HEK293T (cell line): ENCODE measurements at regions of chr4 and their contacts with region 1.

Region 1: DNA sequence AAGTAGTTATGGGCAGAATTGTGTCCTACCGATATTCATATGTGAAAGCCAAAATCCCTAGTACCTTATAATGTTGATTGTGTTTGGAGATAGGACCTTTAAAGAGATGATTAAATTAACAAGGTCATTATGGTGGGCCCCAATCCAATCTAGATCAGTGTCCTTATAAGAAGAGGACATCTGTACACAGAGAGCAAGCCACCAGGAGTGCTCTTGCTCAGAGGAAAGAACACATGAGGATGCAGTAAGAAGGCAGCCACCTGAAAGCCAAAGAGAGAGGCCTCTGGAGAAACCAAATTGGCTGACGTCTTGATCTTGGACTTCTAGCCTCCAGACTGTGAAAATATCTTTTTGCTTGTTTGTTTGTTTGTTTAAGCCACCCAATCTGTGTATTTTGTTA is 1290.8 kb upstream of the PABPC4L start:
- DNase-seq: no peak

Region 2: GRCh38 chr4:135508005-135508714 is 15.7 kb after region 1 on chr4:
- CTCF ChIA-PET with region 1: no interaction called
- POLR2A ChIA-PET with region 1: no interaction called
- DNase-seq: no peak

Region 3: DNA sequence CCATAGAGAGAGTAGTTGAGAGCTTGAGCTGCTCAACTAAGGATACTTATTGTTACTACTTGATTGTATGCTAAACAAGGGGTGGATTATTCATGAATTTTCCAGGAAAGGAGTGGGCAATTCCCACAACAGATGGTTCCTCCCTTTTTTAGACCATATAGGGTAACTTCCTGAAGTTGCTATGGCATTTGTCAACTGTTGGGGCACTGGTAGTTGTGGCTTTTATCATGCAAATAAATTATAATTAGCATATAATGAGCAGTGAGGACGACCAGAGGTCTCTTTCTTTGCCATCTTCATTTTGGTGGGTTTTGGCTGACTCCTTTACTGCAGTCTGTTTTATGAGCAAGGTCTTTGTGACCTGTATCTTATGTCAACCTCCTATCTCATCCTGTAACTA is 112.6 kb after region 1 on chr4:
- CTCF ChIA-PET with region 1: interaction called, 10 read pairs
- POLR2A ChIA-PET with region 1: no interaction called
- DNase-seq: no peak

Region 4: GRCh38 chr4:135741583-135741982 is 249.1 kb after region 1 on chr4:
- CTCF ChIA-PET with region 1: no interaction called
- POLR2A ChIA-PET with region 1: no interaction called
- DNase-seq: no peak